ENCODE measurements at regions of chr21 and their contacts with region 1.

Region 1: DNA sequence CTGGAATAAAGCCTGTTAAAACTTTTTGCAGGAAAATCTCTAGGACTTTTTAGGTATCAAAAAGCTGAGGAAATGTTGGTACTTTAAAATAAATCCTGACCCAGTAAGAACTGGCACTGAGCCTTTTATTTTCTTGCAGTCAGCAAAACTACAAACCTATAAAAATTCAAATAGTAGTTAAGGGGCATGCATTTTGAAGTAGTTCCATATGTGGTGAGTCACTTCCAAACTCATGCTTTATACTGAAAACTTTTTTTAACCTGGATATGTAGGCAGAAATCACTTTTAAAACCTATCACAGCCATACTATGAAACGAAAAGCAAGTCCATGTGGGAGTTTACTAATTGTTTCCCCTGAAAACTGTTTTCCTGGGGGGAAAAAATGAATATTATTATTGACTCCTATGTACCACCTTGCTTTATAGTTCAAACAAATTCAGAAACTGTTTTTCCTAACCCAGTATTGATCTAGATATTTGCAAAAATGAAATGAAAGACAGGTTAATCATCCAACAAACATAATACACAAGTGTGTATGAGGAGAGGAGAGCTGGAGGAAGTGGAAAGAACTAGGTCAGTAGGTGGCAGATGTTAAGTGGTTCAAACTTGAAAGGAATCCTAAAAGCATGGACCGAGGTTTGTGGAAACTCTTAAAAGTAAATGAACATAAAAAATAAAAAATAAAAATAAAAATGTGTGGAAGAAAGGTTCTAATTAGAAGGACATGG is 30.5 kb downstream of the NRIP1 start:
- DNase-seq: no peak
- H3K4me3 Mint-ChIP-seq: peak overlapping the region; percentile 7
- H3K27ac Mint-ChIP-seq: peak overlapping the region; percentile 47
- H3K4me1 Mint-ChIP-seq: peaks cover 45% of the 10 kb centered on the region
- H3K27me3 Mint-ChIP-seq: no peaks in the 10 kb centered on the region

Region 2: DNA sequence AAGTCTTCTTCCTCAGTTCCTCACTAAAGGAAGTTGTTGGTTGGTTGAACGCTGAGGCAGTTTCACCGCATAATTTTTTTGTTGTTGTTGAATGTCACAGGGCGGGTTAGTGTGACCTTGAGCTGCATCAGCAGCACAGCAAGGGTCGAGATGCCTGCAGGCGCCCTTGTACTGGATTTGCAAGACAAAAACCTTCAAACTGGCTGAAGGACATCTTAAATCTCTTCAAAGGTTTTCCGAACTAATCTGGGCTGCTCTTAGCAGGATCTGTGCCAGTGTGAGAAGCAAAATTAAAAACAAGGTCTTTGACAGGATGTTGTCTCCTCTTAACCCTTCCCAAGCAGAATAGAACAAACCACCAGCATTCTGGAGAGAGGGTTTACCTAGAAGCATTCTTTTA is 28.9 kb before region 1 on chr21:
- CTCF ChIA-PET with region 1: no interaction called
- intact Hi-C with region 1: loop called (anchors 2 kb)
- DNase-seq: peak; percentile 25
- H3K4me3 Mint-ChIP-seq: peak overlapping the region; percentile 66
- H3K27ac Mint-ChIP-seq: peak overlapping the region; percentile 42
- H3K4me1 Mint-ChIP-seq: peaks cover 47% of the 10 kb centered on the region
- H3K27me3 Mint-ChIP-seq: no peaks in the 10 kb centered on the region

Region 3: DNA sequence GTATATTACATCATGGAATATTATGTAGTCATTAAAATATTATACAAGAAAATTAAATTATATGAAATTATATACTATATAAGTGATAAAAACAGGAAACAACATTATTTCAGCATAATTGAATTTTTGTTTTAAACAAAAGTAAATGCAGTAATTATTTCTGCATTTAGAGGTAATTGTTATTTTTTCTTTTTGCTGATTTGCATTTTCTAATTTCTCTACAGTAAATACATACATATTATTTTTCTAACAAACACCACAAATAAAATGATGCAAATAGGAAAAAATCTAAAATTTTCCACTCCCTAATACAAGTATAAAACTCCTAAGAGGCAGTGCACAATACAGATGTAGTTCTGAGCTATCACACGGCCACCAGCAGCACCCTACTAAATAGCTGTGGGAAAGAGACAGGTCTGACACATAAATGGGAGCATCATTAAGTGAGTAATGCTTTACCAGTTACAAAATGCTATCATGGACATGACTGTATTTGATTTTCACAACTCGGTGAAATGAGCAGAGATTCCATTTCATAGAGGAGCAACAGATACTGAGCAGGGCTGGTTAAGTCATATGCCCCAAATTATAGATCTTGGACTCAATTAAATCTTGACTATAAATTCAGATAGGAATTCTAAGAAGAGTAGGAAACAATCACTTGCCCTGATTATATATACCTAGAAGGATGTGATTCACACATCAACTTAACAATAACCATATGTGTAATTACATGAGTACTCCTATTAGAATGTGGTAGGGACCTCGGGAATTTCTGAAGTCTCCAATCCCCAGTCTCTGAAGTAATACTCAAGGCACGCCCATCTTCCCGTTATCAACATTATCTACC is 18.4 kb before region 1 on chr21:
- CTCF ChIA-PET with region 1: no interaction called
- intact Hi-C with region 1: loop called (anchors 2 kb)
- DNase-seq: no peak
- H3K4me3 Mint-ChIP-seq: no peak overlapping the region
- H3K27ac Mint-ChIP-seq: no peak overlapping the region
- H3K4me1 Mint-ChIP-seq: peaks cover 21% of the 10 kb centered on the region
- H3K27me3 Mint-ChIP-seq: no peaks in the 10 kb centered on the region

Region 4: GRCh38 chr21:15051644-15052458 is 17.6 kb after region 1 on chr21:
- CTCF ChIA-PET with region 1: no interaction called
- intact Hi-C with region 1: loop called (anchors 1 kb)
- DNase-seq: no peak
- H3K4me3 Mint-ChIP-seq: peak overlapping the region; percentile 69
- H3K27ac Mint-ChIP-seq: peak overlapping the region; percentile 63
- H3K4me1 Mint-ChIP-seq: peaks cover 77% of the 10 kb centered on the region
- H3K27me3 Mint-ChIP-seq: no peaks in the 10 kb centered on the region